Colonic mucosa (tissue), 4 donors: ENCODE measurements at regions of chr11 and their contacts with region 1.

Region 1: GRCh38 chr11:44104481-44105294 is 9.2 kb downstream of the EXT2 start:
- DNase-seq: no peak
- H3K4me3 ChIP-seq: no peak overlapping the region
- H3K27ac ChIP-seq: no peak overlapping the region
- H3K4me1 ChIP-seq: no peaks in the 10 kb centered on the region
- H3K27me3 ChIP-seq: no peaks in the 10 kb centered on the region
- CTCF ChIP-seq: no peak

Region 2: GRCh38 chr11:44286268-44286880 is 181.7 kb after region 1 on chr11:
- intact Hi-C with region 1: loop called (anchors 10 kb)
- DNase-seq: peak; percentile 33
- H3K4me3 ChIP-seq: no peak overlapping the region
- H3K27ac ChIP-seq: no peak overlapping the region
- H3K4me1 ChIP-seq: no peaks in the 10 kb centered on the region
- H3K27me3 ChIP-seq: no peaks in the 10 kb centered on the region
- CTCF ChIP-seq: peak; percentile 91